ENCODE measurements at regions of chr20 and their contacts with region 1.

Region 1: GRCh38 chr20:45095753-45096371 is 5.1 kb downstream of the KCNS1 start:
- DNase-seq: peak; percentile 27
- ATAC-seq: peak; percentile 82
- H3K4me3 ChIP-seq: no peak overlapping the region
- H3K27ac ChIP-seq: no peak overlapping the region
- H3K4me1 ChIP-seq: no peaks in the 10 kb centered on the region
- H3K27me3 ChIP-seq: peaks cover under 1 to 7% of the 10 kb centered on the region in 2 experiments; a peak in 3 of 4 replicates
- CTCF ChIP-seq: peak; percentile 69 to 86 (median 84)
- EP300 ChIP-seq: no peak
- POLR2A ChIP-seq: no peak
- RAD21 ChIP-seq: peak; percentile 86

Region 2: GRCh38 chr20:44946271-44946852 is 149.5 kb before region 1 on chr20:
- CTCF ChIA-PET with region 1: interaction called, 10 read pairs
- POLR2A ChIA-PET with region 1: no interaction called
- RAD21 ChIA-PET with region 1: interaction called, 3 read pairs
- SMC1A ChIA-PET with region 1: no interaction called
- in situ Hi-C with region 1: no loop called
- intact Hi-C with region 1: no loop called
- DNase-seq: no peak
- ATAC-seq: no peak
- H3K4me3 ChIP-seq: no peak overlapping the region
- H3K27ac ChIP-seq: no peak overlapping the region
- H3K4me1 ChIP-seq: no peaks in the 10 kb centered on the region
- H3K27me3 ChIP-seq: no peaks in the 10 kb centered on the region
- CTCF ChIP-seq: no peak
- EP300 ChIP-seq: no peak
- POLR2A ChIP-seq: no peak
- RAD21 ChIP-seq: no peak

Region 3: GRCh38 chr20:45011108-45011526 is 84.7 kb before region 1 on chr20:
- CTCF ChIA-PET with region 1: interaction called, 65 read pairs
- POLR2A ChIA-PET with region 1: no interaction called
- RAD21 ChIA-PET with region 1: interaction called, 28 read pairs
- SMC1A ChIA-PET with region 1: interaction called, 18 read pairs
- in situ Hi-C with region 1: no loop called
- intact Hi-C with region 1: loop called (anchors 5 kb)
- DNase-seq: no peak
- ATAC-seq: peak; percentile 79
- H3K4me3 ChIP-seq: no peak overlapping the region
- H3K27ac ChIP-seq: no peak overlapping the region
- H3K4me1 ChIP-seq: no peaks in the 10 kb centered on the region
- H3K27me3 ChIP-seq: no peaks in the 10 kb centered on the region
- CTCF ChIP-seq: peak; percentile 55 to 64 (median 61)
- EP300 ChIP-seq: no peak
- POLR2A ChIP-seq: no peak
- RAD21 ChIP-seq: peak; percentile 67

Region 4: DNA sequence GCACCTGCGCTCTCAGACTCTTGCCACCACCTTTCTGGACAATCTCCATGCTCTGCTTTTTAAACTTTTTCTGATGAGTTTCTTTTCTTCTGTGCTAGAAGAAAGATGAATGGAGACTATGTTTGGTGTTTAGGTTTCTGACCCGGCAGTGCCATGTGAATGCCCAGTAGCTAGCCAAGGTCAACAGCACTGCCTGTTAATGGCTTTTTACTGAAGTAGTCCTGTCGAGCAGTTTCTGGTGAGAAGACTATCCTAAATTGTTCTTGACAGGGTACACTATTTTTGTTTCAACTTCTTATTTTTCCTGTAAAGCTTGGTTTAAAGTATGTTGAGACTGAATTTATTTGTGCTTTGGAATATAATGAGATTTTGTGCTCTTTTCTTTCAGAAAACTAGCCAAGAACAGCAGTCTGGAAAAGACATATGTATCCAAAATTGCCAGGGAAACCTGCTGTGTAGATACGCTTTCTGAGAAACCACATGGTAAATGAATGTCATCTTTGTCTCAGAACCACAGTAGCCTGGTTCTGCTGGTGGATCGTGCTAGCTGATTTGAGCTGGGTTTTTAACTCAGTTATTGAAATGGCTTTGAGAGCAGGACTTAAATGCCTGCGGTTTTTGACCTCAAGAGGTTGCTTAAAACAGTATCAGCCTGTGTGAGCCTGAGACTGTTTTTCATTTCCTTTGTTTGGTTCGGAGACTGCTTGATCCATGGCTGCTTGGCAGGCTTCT is 43.0 kb before region 1 on chr20:
- CTCF ChIA-PET with region 1: interaction called, 91 read pairs
- POLR2A ChIA-PET with region 1: no interaction called
- RAD21 ChIA-PET with region 1: interaction called, 47 read pairs
- SMC1A ChIA-PET with region 1: interaction called, 82 read pairs
- in situ Hi-C with region 1: no loop called
- intact Hi-C with region 1: no loop called
- DNase-seq: peak; percentile 55
- ATAC-seq: peak; percentile 78
- H3K4me3 ChIP-seq: no peak overlapping the region; the same call in 1 of the 2 replicates
- H3K27ac ChIP-seq: peak overlapping the region; percentile 39
- H3K4me1 ChIP-seq: peaks cover 48% of the 10 kb centered on the region
- H3K27me3 ChIP-seq: no peaks in the 10 kb centered on the region
- CTCF ChIP-seq: no peak
- EP300 ChIP-seq: peak in 1 of 2 experiments; percentile 26; a peak in 2 of 4 replicates
- POLR2A ChIP-seq: no peak
- RAD21 ChIP-seq: no peak

Region 5: DNA sequence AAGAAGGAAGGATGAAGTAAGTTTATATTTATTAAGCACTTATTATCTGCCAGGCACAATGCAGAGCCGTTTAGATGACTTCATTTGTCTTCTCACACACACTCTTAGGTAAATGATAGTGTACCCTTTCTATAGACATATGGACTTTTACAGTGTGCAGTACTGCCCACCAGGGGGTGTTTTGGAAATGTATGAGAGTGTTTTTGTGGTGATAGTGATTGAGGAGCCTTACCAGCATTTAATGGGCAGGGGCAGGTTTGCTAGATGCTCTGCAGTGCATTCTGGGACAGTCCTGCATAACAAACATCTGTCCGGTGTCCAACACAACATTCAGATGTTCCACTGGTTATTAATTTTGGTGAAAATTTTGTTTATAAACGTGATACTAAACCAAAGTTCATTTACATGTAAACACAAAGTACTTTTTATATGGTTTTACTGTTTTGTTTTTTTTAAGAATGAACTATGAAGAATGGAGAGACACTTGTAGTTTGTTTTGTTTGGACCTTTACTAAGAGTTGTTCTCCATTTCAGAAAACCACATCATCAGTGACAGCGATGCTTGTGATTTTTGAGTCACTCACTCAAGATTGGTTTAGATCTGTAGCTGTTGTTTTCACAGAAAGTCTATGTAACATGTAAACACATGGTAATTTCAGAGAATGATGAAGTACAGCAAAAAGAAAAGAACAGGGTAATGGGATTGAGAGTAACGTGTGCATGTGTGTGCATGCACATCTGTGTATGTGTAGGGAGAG is 14.8 kb before region 1 on chr20:
- CTCF ChIA-PET with region 1: interaction called, 18 read pairs
- POLR2A ChIA-PET with region 1: no interaction called
- RAD21 ChIA-PET with region 1: no interaction called
- SMC1A ChIA-PET with region 1: interaction called, 4 read pairs
- in situ Hi-C with region 1: no loop called
- intact Hi-C with region 1: no loop called
- DNase-seq: no peak
- ATAC-seq: peak; percentile 75
- H3K4me3 ChIP-seq: no peak overlapping the region
- H3K27ac ChIP-seq: no peak overlapping the region
- H3K4me1 ChIP-seq: no peaks in the 10 kb centered on the region
- H3K27me3 ChIP-seq: no peaks in the 10 kb centered on the region
- CTCF ChIP-seq: peak; percentile 10 to 31 (median 27); a peak in 2 of 6 replicates
- EP300 ChIP-seq: no peak
- POLR2A ChIP-seq: no peak
- RAD21 ChIP-seq: no peak

Region 6: DNA sequence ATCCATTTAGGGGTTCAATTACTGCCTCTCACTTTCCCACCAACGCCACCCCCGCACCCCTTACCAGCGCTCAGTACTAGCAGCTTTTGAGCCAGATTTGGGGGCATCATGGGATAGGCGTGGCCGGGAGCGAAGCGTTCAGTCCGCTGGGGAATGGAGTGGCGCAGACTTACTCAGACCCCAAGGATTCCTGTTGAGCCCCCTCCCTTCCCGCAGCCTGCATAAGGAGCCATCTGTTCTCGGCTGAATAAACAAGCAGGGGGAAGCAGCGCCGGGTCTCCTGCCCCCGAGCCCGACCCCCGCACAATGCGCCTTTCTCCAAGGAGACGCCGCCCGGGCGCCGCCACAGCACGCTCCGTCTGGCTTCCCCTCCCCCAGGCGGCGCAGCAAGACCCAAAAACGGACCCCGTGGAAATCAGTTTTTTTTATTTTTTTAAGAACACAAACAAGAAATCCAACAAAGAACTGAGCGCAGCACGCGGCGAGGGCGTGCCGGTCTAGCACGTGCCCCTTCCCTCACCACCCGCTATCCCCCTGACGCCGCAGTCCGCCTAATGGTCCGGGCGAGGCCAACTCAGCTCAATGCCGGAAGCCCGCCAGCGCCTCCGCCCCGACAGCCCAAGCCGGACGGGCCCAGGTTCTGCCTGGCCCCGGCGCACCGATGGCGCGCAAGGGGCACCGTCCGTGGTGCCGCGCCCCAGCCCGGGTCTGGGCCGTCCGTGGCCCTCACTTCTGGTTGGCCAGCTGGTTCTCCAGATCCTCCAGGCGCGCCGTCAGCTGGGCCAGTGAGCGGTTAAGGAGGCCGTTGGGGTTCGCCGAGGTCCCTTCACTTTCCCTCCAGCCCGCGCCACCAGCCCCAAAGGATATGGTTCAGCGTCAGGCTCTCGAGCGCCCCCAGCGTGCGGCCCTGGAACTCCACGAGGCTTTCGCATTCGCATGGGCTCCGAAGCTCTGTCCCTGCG is 197.5 kb after region 1 on chr20:
- CTCF ChIA-PET with region 1: interaction called, 30 read pairs
- POLR2A ChIA-PET with region 1: no interaction called
- RAD21 ChIA-PET with region 1: interaction called, 8 read pairs
- SMC1A ChIA-PET with region 1: interaction called, 5 read pairs
- in situ Hi-C with region 1: no loop called
- intact Hi-C with region 1: loop called (anchors 5 kb)
- DNase-seq: no peak
- ATAC-seq: peak; percentile 93
- H3K4me3 ChIP-seq: peak overlapping the region; percentile 30; the same call in 1 of the 2 replicates
- H3K27ac ChIP-seq: no peak overlapping the region
- H3K4me1 ChIP-seq: no peaks in the 10 kb centered on the region
- H3K27me3 ChIP-seq: peaks cover 6 to 7% of the 10 kb centered on the region in 2 experiments; a peak in 3 of 4 replicates
- CTCF ChIP-seq: peak; percentile 83 to 96 (median 89)
- EP300 ChIP-seq: no peak
- POLR2A ChIP-seq: no peak
- RAD21 ChIP-seq: peak; percentile 25; the same call in 1 of the 2 replicates

Region 7: DNA sequence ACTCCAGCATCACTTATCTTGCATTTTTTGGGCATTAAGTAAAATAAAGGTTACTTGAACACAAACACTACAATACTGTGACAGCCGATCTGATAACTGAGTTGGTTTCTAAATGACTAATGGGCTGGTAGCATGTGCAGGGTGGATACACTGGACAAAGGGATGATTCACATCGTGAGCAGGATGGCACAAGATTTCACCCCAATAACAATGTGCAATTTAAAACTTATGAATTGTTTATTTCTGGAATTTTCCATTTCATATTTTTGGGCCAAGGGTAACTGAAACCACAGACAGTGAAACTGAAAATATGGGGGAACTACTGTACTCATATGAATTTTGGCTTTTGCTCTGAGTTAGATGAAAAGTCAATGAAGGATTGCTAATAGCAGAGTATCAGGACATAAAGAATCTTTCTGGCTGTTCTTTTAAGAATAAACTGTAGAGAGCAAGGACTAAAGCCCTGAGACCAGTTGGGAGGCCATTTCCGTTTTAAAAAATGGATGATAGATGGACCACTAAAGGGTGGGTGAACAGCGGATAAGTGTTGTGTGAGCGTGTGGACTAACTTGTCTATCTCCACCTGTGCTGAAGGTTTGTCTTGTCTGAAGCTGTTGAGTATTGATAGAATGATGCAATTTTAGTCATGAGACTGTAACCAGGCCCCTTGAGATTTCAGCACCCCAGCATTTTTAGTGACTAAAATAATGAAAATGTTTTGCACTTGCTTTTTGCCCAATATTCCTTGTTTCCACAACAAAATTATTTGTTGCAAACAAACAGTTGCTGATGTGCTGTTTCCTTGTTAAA is 411.4 kb after region 1 on chr20:
- CTCF ChIA-PET with region 1: no interaction called
- POLR2A ChIA-PET with region 1: no interaction called
- RAD21 ChIA-PET with region 1: no interaction called
- SMC1A ChIA-PET with region 1: no interaction called
- in situ Hi-C with region 1: no loop called
- intact Hi-C with region 1: no loop called
- DNase-seq: peak; percentile 17
- ATAC-seq: peak; percentile 85
- H3K4me3 ChIP-seq: no peak overlapping the region
- H3K27ac ChIP-seq: no peak overlapping the region
- H3K4me1 ChIP-seq: peaks cover 5% of the 10 kb centered on the region
- H3K27me3 ChIP-seq: peaks cover 0 to 2% of the 10 kb centered on the region in 2 experiments; a peak in 1 of 4 replicates
- CTCF ChIP-seq: no peak
- EP300 ChIP-seq: no peak
- POLR2A ChIP-seq: no peak
- RAD21 ChIP-seq: no peak

Measured in GM12878 (cell line).